KBM-7 (cell line): ENCODE measurements at regions of chr17 and their contacts with region 1.

Region 1: DNA sequence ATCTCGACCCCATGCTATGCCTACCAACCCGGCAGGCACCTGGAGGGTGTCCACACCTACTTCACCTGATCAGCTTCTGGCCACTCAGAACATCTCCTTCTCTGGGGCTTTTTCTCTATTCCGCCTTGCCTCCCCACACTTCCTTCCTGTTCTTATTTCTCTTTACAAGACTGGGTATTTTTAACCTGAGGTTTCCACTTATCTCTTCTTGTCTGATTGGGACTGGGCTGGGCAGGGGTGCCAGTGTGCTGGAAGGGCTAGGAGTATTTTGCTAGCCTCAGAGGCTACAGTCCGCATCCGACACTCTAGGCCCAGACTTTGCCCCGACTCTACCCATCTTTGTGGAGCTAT is 26.2 kb upstream of the ZNF652 start:
- DNase-seq: peak; percentile 76

Region 2: GRCh38 chr17:49315551-49316257 is 72.6 kb before region 1 on chr17:
- in situ Hi-C with region 1: loop called (anchors 10 kb)
- DNase-seq: peak; percentile 86

Region 3: GRCh38 chr17:50101346-50102163 is 713.3 kb after region 1 on chr17:
- in situ Hi-C with region 1: no loop called
- DNase-seq: no peak